AG04449 (cell line): ENCODE measurements at regions of chr13 and their contacts with region 1.

Region 1: GRCh38 chr13:98842864-98843481 is 90.5 kb upstream of the SLC15A1 start:
- DNase-seq: no peak
- H3K4me3 ChIP-seq: no peak overlapping the region
- CTCF ChIP-seq: peak; percentile 89

Region 2: GRCh38 chr13:98445340-98446233 is 397.4 kb before region 1 on chr13:
- CTCF ChIA-PET with region 1: interaction called, 13 read pairs
- POLR2A ChIA-PET with region 1: no interaction called
- DNase-seq: no peak
- H3K4me3 ChIP-seq: no peak overlapping the region
- CTCF ChIP-seq: peak; percentile 98

Region 3: GRCh38 chr13:98672944-98673545 is 169.9 kb before region 1 on chr13:
- CTCF ChIA-PET with region 1: interaction called, 13 read pairs
- POLR2A ChIA-PET with region 1: no interaction called
- DNase-seq: peak; percentile 19
- H3K4me3 ChIP-seq: no peak overlapping the region
- CTCF ChIP-seq: peak; percentile 63

Region 4: GRCh38 chr13:98821372-98822224 is 21.4 kb before region 1 on chr13:
- CTCF ChIA-PET with region 1: interaction called, 19 read pairs
- POLR2A ChIA-PET with region 1: no interaction called
- DNase-seq: no peak
- H3K4me3 ChIP-seq: no peak overlapping the region
- CTCF ChIP-seq: no peak

Region 5: DNA sequence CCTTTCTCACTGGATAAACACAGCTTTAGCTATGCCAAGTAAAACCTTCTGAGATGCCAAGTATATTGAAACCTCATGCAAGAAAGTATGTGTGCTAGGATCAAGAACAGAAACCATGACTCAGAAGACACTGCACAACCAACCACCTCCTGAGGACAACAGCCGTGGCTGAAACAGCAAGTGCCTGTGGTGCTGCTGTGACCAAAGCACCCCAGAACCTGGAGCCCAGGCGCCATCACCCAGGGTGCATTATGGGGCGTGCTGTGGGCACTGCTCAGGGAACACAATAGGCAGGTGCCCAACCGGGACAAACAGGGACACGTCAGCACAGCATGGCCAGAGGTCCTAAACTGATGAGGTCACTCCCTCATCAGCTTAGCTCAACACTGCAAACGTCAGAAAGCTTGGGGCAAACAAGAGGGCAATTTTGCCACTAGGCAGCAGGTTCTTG is 10.8 kb after region 1 on chr13:
- CTCF ChIA-PET with region 1: interaction called, 97 read pairs
- POLR2A ChIA-PET with region 1: no interaction called
- DNase-seq: peak; percentile 57
- H3K4me3 ChIP-seq: no peak overlapping the region
- CTCF ChIP-seq: no peak